CD14-positive monocyte (primary cell): ENCODE measurements at regions of chr4 and their contacts with region 1.

Region 1: DNA sequence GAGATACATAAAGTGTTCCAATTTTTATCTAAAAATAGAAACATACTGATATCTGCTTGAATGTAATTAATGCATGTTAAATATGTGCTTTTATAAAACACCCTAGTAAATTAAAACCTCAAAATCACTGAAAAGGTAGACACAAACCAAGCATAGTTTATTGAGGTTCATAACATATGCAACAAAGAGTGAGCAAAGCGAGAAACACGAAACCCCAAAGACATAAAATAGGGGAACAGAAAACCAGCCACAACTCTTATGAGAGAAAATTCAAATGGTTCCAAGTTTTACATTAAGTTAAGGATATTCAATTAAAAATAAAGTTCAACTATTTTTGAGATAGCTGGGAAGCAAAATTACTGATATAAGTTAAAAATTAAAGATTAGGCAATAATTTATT is 336.4 kb upstream of the AGA start:
- DNase-seq: no peak
- H3K4me3 ChIP-seq: no peak overlapping the region
- H3K4me3 Mint-ChIP-seq: no peak overlapping the region
- H3K27ac ChIP-seq: no peak overlapping the region
- H3K27ac Mint-ChIP-seq: no peak overlapping the region
- H3K4me1 ChIP-seq: no peaks in the 10 kb centered on the region
- H3K4me1 Mint-ChIP-seq: no peaks in the 10 kb centered on the region
- H3K27me3 ChIP-seq: no peaks in the 10 kb centered on the region
- H3K27me3 Mint-ChIP-seq: no peaks in the 10 kb centered on the region
- CTCF ChIP-seq: no peak

Region 2: DNA sequence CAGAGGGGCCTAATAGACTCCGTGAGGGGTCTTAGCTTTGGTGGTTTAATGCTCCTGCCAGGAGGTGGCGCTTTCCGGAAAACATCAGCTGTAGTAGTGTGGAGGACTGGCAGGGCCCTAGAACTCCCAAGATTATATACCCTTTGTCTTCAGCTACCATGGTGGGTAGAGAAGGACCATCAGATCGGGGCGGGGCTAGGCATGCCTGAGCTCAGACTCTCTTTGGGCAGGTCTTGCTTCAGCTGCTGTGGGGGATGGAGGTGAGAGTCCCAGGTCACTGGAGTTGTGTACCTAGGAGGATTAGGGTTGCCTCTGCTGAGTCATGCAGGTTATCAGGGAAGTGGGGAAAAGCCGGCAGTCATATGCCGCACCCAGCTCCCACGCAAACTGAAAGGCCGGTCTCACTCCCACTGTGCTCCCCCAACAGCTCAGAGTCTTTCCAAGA is 273.4 kb before region 1 on chr4:
- intact Hi-C with region 1: loop called in 1 of 2 experiments (anchors 10 kb)
- DNase-seq: no peak
- H3K4me3 ChIP-seq: no peak overlapping the region
- H3K4me3 Mint-ChIP-seq: no peak overlapping the region
- H3K27ac ChIP-seq: no peak overlapping the region
- H3K27ac Mint-ChIP-seq: no peak overlapping the region
- H3K4me1 ChIP-seq: no peaks in the 10 kb centered on the region
- H3K4me1 Mint-ChIP-seq: no peaks in the 10 kb centered on the region
- H3K27me3 ChIP-seq: no peaks in the 10 kb centered on the region
- H3K27me3 Mint-ChIP-seq: peaks cover 0 to 3% (median 3%) of the 10 kb centered on the region in 3 donors
- CTCF ChIP-seq: no peak

Region 3: DNA sequence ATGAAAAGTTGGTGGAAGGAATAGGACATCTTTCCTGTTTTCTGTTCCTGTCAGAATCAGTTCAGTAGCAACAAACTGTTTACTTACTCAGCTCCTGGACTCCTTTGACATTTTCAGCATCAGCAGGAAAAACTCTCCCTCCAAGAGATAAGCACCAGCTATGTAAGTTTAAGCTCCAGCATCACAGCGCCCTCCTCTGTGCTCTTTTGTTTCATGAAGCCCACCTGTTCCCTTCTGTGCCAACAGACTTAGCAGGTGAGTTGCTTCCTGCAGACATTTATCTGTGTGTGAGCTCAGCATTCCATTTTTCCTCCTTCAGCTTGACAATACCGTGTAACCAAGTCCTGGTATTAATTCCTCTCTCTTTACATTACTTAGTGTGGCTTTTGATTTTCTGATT is 307.7 kb after region 1 on chr4:
- intact Hi-C with region 1: no loop called
- DNase-seq: no peak
- H3K4me3 ChIP-seq: no peak overlapping the region
- H3K4me3 Mint-ChIP-seq: no peak overlapping the region
- H3K27ac ChIP-seq: no peak overlapping the region
- H3K27ac Mint-ChIP-seq: no peak overlapping the region
- H3K4me1 ChIP-seq: no peaks in the 10 kb centered on the region
- H3K4me1 Mint-ChIP-seq: no peaks in the 10 kb centered on the region
- H3K27me3 ChIP-seq: no peaks in the 10 kb centered on the region
- H3K27me3 Mint-ChIP-seq: no peaks in the 10 kb centered on the region
- CTCF ChIP-seq: no peak